T-cell (primary cell): ENCODE measurements at regions of chr16 and their contacts with region 1.

Region 1: DNA sequence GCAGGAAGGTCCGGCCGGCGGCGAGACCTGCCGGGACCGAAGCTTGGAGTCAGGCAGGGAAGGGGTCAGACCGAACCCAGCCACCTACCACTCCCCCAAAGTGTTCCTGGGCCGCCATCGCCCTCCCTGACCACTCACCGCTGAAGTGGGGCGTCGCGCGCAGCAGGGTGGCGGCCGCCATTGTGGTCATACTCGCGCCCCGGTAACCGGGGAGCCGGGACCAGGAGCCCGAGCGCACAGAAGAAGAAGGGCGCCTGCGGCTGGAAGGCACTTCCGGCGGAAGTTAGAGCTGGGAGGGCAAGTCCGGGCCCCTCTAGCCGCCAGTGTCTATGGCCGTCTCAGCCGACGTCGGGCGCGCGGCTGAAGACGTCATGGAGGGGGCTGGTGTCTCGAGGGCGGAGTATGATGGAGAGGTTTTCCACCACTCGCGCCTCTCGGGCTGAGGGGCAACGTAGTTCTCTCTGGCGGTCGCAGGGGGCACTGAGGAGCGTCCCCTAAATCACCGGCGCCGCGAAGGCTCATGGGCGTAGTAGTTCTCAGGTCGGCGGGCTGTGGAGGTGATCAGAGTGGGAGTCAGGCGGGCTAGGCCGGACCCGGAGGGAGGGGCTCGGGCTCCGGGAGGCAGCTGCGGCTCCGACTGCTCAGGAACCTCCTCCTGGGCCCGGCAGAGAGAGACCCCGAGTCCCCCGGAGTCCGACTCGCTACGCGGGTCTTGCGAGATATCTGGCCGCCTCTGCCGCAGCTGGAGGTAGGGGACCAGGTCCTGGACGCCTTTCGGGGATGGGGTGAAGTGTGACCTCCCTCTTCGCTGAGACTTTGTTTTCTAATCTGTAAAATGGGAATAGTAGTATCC is at the start of gene TUFM:
- DNase-seq: peak; percentile 94 to 99 (median 98)
- ATAC-seq: peak; percentile 94 to 98 (median 95)
- H3K4me3 ChIP-seq: peak within 1 kb of the TSS; percentile 82 to 95
- H3K4me3 Mint-ChIP-seq: peak within 1 kb of the TSS; percentile 93 to 95 (median 94)
- H3K27ac ChIP-seq: peak within 1 kb of the TSS; percentile 71
- H3K27ac Mint-ChIP-seq: peak within 1 kb of the TSS; percentile 89 to 96
- H3K4me1 ChIP-seq: peaks cover 14 to 29% of the 10 kb centered on the region in 2 experiments
- H3K4me1 Mint-ChIP-seq: peaks cover 20 to 37% (median 30%) of the 10 kb centered on the region in 3 donors
- H3K27me3 ChIP-seq: no peaks in the 10 kb centered on the region
- H3K27me3 Mint-ChIP-seq: no peaks in the 10 kb centered on the region
- total RNA-seq, gene TUFM: 90.2 to 131 (median 105) TPM

Region 2: GRCh38 chr16:28863929-28864793 is 17.9 kb after region 1 on chr16:
- CTCF ChIA-PET with region 1: interaction called in 1 of 2 experiments, 13 read pairs
- POLR2A ChIA-PET with region 1: no interaction called
- DNase-seq: peak in 22 of 35 experiments; percentile 14 to 60 (median 30)
- ATAC-seq: peak in 1 of 4 experiments; percentile 5
- H3K4me3 ChIP-seq: peak overlapping the region; percentile 97 to 99
- H3K4me3 Mint-ChIP-seq: peak overlapping the region; percentile 94 to 98 (median 96)
- H3K27ac ChIP-seq: peak overlapping the region; percentile 94
- H3K27ac Mint-ChIP-seq: peak overlapping the region; percentile 98
- H3K4me1 ChIP-seq: peaks cover 2 to 33% of the 10 kb centered on the region in 2 experiments
- H3K4me1 Mint-ChIP-seq: peaks cover 26 to 28% (median 28%) of the 10 kb centered on the region in 3 donors
- H3K27me3 ChIP-seq: no peaks in the 10 kb centered on the region
- H3K27me3 Mint-ChIP-seq: no peaks in the 10 kb centered on the region

Region 3: GRCh38 chr16:30378236-30379204 is 1532.2 kb after region 1 on chr16:
- CTCF ChIA-PET with region 1: no interaction called
- POLR2A ChIA-PET with region 1: interaction called in 1 of 2 experiments, 19 read pairs
- DNase-seq: peak; percentile 97 to 100 (median 99)
- ATAC-seq: peak; percentile 79 to 86 (median 80)
- H3K4me3 ChIP-seq: peak overlapping the region; percentile 62 to 90
- H3K4me3 Mint-ChIP-seq: peak overlapping the region; percentile 97 to 100 (median 99)
- H3K27ac ChIP-seq: peak overlapping the region; percentile 99
- H3K27ac Mint-ChIP-seq: peak overlapping the region; percentile 99 to 100
- H3K4me1 ChIP-seq: peaks cover 24 to 74% of the 10 kb centered on the region in 2 experiments
- H3K4me1 Mint-ChIP-seq: peaks cover 62 to 64% (median 64%) of the 10 kb centered on the region in 3 donors
- H3K27me3 ChIP-seq: no peaks in the 10 kb centered on the region
- H3K27me3 Mint-ChIP-seq: no peaks in the 10 kb centered on the region